Naive thymus-derived CD4-positive, alpha-beta T cell (primary cell): ENCODE measurements at regions of chr9 and their contacts with region 1.

Region 1: GRCh38 chr9:4662108-4662988 is at the start of gene PLPP6:
- DNase-seq: peak; percentile 55 to 81 (median 76)
- ATAC-seq: peak; percentile 86
- H3K4me3 ChIP-seq: peak within 1 kb of the TSS; percentile 63
- H3K4me3 Mint-ChIP-seq: peak within 1 kb of the TSS; percentile 89 to 98 (median 96)
- H3K27ac ChIP-seq: peak within 1 kb of the TSS; percentile 78
- H3K27ac Mint-ChIP-seq: peak within 1 kb of the TSS; percentile 85 to 98 (median 95)
- H3K4me1 ChIP-seq: peaks cover 21 to 50% of the 10 kb centered on the region in 2 donors
- H3K4me1 Mint-ChIP-seq: peaks cover 41 to 80% (median 64%) of the 10 kb centered on the region in 7 donors
- H3K27me3 ChIP-seq: no peaks in the 10 kb centered on the region
- H3K27me3 Mint-ChIP-seq: peaks cover 0 to 12% (median 0%) of the 10 kb centered on the region in 5 donors
- total RNA-seq, gene PLPP6: 7.4 to 24.1 (median 10.2) TPM

Region 2: GRCh38 chr9:4596165-4596922 is 66.0 kb before region 1 on chr9:
- CTCF ChIA-PET with region 1: interaction called, 4 read pairs
- POLR2A ChIA-PET with region 1: interaction called, 10 read pairs
- intact Hi-C with region 1: loop called in 1 of 2 experiments (anchors 2 kb)
- DNase-seq: peak in 7 of 9 donors; percentile 81 to 94 (median 91)
- ATAC-seq: peak; percentile 95
- H3K4me3 ChIP-seq: peak overlapping the region; percentile 13
- H3K4me3 Mint-ChIP-seq: peak overlapping the region; percentile 29 to 80 (median 68)
- H3K27ac ChIP-seq: peak overlapping the region; percentile 74
- H3K27ac Mint-ChIP-seq: peak overlapping the region; percentile 58 to 99 (median 97)
- H3K4me1 ChIP-seq: peaks cover 30 to 53% of the 10 kb centered on the region in 2 donors
- H3K4me1 Mint-ChIP-seq: peaks cover 32 to 76% (median 60%) of the 10 kb centered on the region in 7 donors
- H3K27me3 ChIP-seq: no peaks in the 10 kb centered on the region
- H3K27me3 Mint-ChIP-seq: peaks cover 0 to 5% (median 0%) of the 10 kb centered on the region in 5 donors

Region 3: GRCh38 chr9:4750023-4750673 is 87.8 kb after region 1 on chr9:
- CTCF ChIA-PET with region 1: no interaction called
- POLR2A ChIA-PET with region 1: no interaction called
- intact Hi-C with region 1: loop called in 1 of 2 experiments (anchors 1 kb)
- DNase-seq: peak in 5 of 9 donors; percentile 28 to 40 (median 33)
- ATAC-seq: peak; percentile 73
- H3K4me3 ChIP-seq: no peak overlapping the region
- H3K4me3 Mint-ChIP-seq: no peak overlapping the region
- H3K27ac ChIP-seq: no peak overlapping the region
- H3K27ac Mint-ChIP-seq: no peak overlapping the region
- H3K4me1 ChIP-seq: no peaks in the 10 kb centered on the region
- H3K4me1 Mint-ChIP-seq: peaks cover 0 to 7% (median 4%) of the 10 kb centered on the region in 7 donors
- H3K27me3 ChIP-seq: no peaks in the 10 kb centered on the region
- H3K27me3 Mint-ChIP-seq: peaks cover 0 to 12% (median 0%) of the 10 kb centered on the region in 5 donors

Region 4: DNA sequence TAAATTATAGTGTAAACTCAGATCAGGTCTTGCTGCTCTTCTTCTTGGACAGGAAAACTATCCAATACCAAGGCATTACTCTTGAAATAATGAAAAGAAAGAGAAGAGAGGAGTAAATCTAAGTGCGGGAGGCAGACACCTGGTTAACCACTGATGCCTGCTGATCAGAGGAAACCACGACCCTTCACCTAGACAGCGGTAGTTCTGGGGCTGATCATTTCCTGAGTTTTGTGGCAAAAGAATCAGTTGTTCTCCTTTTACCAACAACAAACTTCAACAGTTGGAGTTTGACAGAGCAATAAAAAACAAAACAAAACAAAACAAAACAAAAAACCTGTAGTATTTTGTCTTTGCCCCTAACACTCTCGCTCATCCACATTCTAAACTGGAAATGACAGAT is 674.3 kb after region 1 on chr9:
- CTCF ChIA-PET with region 1: no interaction called
- POLR2A ChIA-PET with region 1: no interaction called
- intact Hi-C with region 1: loop called in 1 of 2 experiments (anchors 10 kb)
- DNase-seq: peak in 7 of 9 donors; percentile 47 to 70 (median 60)
- ATAC-seq: peak; percentile 62
- H3K4me3 ChIP-seq: peak overlapping the region; percentile 27
- H3K4me3 Mint-ChIP-seq: peak overlapping the region; percentile 64 to 87 (median 80)
- H3K27ac ChIP-seq: peak overlapping the region; percentile 64
- H3K27ac Mint-ChIP-seq: peak overlapping the region; percentile 79 to 95 (median 91)
- H3K4me1 ChIP-seq: peaks cover 24 to 28% of the 10 kb centered on the region in 2 donors
- H3K4me1 Mint-ChIP-seq: peaks cover 20 to 64% (median 50%) of the 10 kb centered on the region in 7 donors
- H3K27me3 ChIP-seq: no peaks in the 10 kb centered on the region
- H3K27me3 Mint-ChIP-seq: no peaks in the 10 kb centered on the region